ENCODE measurements at regions of chr17 and their contacts with region 1.

Region 1: GRCh38 chr17:36486204-36487194 is at the start of gene ZNHIT3:
- DNase-seq: peak; percentile 97
- H3K27ac ChIP-seq: peak within 1 kb of the TSS; percentile 83
- CTCF ChIP-seq: no peak

Region 2: GRCh38 chr17:36463916-36464315 is 22.6 kb before region 1 on chr17:
- CTCF ChIA-PET with region 1: interaction called, 10 read pairs
- POLR2A ChIA-PET with region 1: interaction called, 3 read pairs
- DNase-seq: peak; percentile 94
- H3K27ac ChIP-seq: no peak overlapping the region
- CTCF ChIP-seq: no peak

Region 3: DNA sequence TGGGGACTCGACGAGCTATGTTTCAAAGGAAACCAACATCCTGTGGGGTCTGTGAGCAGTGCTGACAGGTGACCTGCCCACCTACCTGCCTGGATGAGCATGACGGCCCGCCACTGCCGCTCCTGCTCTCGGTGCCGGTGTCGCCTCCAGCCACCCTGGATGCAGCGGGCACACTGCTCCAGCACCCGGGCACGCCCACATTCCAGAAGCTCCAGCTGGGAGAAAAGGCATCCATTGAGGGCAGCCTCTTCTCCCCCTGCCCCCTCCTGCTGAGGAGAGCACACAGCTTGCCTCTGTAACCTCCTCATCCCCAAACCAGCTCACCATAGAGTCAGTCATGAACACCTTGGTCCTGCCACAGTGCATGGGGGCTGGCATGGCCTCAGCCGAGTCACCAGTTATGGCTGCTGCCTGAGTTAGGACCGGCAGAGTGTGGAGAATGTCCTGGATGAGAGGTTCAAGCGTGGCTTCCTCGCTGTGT is 14.3 kb after region 1 on chr17:
- CTCF ChIA-PET with region 1: no interaction called
- POLR2A ChIA-PET with region 1: no interaction called
- DNase-seq: no peak
- H3K27ac ChIP-seq: peak overlapping the region; percentile 34
- CTCF ChIP-seq: no peak

Region 4: GRCh38 chr17:37292429-37293139 is 806.1 kb after region 1 on chr17:
- CTCF ChIA-PET with region 1: interaction called, 10 read pairs
- POLR2A ChIA-PET with region 1: no interaction called
- DNase-seq: no peak
- H3K27ac ChIP-seq: peak overlapping the region; percentile 60
- CTCF ChIP-seq: no peak